HepG2 (cell line): ENCODE measurements at regions of chr16 and their contacts with region 1.

Region 1: GRCh38 chr16:78134929-78135619 is 35.6 kb downstream of the WWOX start:
- DNase-seq: peak; percentile 51
- ATAC-seq: peak; percentile 75
- H3K4me3 ChIP-seq: no peak overlapping the region; a peak in 1 of 6 replicates
- H3K27ac ChIP-seq: peak overlapping the region; percentile 0
- H3K4me1 ChIP-seq: peaks cover 48% of the 10 kb centered on the region
- H3K27me3 ChIP-seq: no peaks in the 10 kb centered on the region
- CTCF ChIP-seq: peak; percentile 66
- EP300 ChIP-seq: peak in 1 of 2 experiments; percentile 43; a peak in 2 of 4 replicates
- POLR2A ChIP-seq: no peak
- RAD21 ChIP-seq: peak; percentile 23; the same call in 1 of the 2 replicates

Region 2: DNA sequence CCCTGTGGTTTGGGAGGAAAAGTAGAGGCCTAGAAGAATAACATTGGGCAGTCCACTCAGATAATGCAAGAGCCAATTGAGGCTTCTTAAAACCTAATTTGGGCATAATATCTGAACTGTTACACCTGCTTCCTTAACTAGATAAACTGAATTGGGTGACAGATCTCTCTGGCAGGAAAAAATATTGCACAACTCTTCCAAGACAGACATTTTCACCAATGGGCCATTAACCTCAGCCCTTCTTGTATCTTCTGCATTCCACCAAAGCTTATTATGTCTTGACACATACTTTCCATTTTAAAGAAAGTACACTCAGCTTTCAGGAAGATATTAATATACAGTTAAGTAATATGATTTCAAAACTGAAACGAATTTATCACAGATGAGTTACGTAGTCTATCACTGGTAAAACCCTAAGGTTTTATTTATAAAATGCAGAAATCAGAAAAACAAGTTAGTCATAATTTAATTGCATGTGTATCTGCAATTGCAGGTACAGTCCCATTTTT is 1024.0 kb before region 1 on chr16:
- CTCF ChIA-PET with region 1: no interaction called
- POLR2A ChIA-PET with region 1: no interaction called
- in situ Hi-C with region 1: no loop called
- intact Hi-C with region 1: no loop called
- DNase-seq: no peak
- ATAC-seq: no peak
- H3K4me3 ChIP-seq: no peak overlapping the region
- H3K27ac ChIP-seq: no peak overlapping the region
- H3K4me1 ChIP-seq: no peaks in the 10 kb centered on the region
- H3K27me3 ChIP-seq: no peaks in the 10 kb centered on the region
- CTCF ChIP-seq: no peak
- EP300 ChIP-seq: no peak
- POLR2A ChIP-seq: no peak
- RAD21 ChIP-seq: no peak

Region 3: DNA sequence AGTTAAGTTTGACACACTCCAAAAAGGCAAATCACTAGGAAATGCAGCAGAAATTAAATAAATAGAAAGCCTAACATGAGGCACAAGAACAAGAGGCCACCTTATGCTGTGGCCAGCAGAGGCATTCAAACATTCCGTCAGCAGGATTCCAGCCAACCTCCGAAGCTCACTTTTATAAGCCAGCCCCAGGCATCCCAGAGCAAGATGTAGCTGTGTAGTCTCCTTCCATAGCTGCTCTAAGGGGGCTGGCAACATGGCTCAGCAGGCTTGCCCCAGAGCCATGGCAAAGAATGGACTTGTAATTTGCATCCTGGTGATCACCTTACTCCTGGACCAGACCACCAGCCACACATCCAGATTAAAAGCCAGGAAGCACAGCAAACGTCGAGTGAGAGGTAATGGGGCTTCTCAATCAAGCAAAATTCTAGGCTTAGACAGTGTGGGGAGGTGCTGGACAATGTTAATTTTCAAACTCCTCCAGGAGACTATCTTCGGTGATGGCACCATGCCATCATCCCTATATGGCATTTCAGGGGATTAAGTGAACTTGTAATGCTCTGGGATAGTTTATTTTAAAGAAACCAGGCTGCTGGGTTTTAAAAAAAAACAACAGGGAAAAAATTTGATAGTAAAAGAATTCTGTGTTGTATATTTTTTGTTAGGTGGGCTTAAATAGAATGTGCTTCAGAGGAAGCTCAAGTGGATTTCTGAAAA is 112.6 kb before region 1 on chr16 and contains the start of gene CLEC3A:
- CTCF ChIA-PET with region 1: no interaction called
- POLR2A ChIA-PET with region 1: no interaction called
- in situ Hi-C with region 1: no loop called
- intact Hi-C with region 1: no loop called
- DNase-seq: no peak
- ATAC-seq: no peak
- H3K4me3 ChIP-seq: no peak within 1 kb of the TSS
- H3K27ac ChIP-seq: no peak within 1 kb of the TSS
- H3K4me1 ChIP-seq: no peaks in the 10 kb centered on the region
- H3K27me3 ChIP-seq: peaks cover 0 to 7% of the 10 kb centered on the region in 2 experiments; a peak in 2 of 5 replicates
- CTCF ChIP-seq: no peak
- EP300 ChIP-seq: no peak
- POLR2A ChIP-seq: no peak
- RAD21 ChIP-seq: no peak
- total RNA-seq, gene CLEC3A: not detected in 2 replicates

Region 4: GRCh38 chr16:78184238-78185183 is 49.4 kb after region 1 on chr16:
- CTCF ChIA-PET with region 1: no interaction called
- POLR2A ChIA-PET with region 1: no interaction called
- in situ Hi-C with region 1: loop called (anchors 5 kb)
- intact Hi-C with region 1: no loop called
- DNase-seq: peak; percentile 68
- ATAC-seq: peak; percentile 67
- H3K4me3 ChIP-seq: no peak overlapping the region
- H3K27ac ChIP-seq: no peak overlapping the region
- H3K4me1 ChIP-seq: peaks cover 34% of the 10 kb centered on the region
- H3K27me3 ChIP-seq: no peaks in the 10 kb centered on the region
- CTCF ChIP-seq: no peak
- EP300 ChIP-seq: peak in 1 of 2 experiments; percentile 26; a peak in 1 of 4 replicates
- POLR2A ChIP-seq: no peak
- RAD21 ChIP-seq: no peak

Region 5: DNA sequence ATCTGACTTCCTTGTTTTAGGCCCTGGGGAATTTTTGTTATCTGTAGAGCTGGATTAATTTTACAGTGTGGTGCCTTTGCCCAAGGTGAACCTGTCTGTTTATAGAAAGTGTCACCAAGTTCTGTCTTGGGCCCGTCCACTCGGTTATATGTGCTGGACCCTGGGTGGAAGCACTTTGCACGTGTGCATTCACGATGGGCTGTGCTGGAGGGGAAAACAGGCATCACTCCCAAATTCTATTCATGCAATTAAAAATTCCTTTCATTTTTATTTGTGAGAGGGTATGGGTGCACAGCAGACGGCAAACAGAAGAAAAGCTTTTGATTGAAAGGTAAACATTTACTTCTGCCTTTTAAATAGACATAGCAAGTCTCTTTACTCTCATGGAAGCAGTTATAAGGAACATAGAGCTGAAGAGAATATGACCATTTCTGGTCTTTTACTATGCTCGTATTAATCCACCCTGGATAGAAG is 65.6 kb after region 1 on chr16:
- CTCF ChIA-PET with region 1: no interaction called
- POLR2A ChIA-PET with region 1: interaction called, 3 read pairs
- in situ Hi-C with region 1: no loop called
- intact Hi-C with region 1: loop called (anchors 2 kb)
- DNase-seq: peak; percentile 77
- ATAC-seq: peak; percentile 85
- H3K4me3 ChIP-seq: peak overlapping the region in 2 of 3 experiments; percentile 9 to 30; a peak in 2 of 6 replicates
- H3K27ac ChIP-seq: peak overlapping the region; percentile 33
- H3K4me1 ChIP-seq: peaks cover 70% of the 10 kb centered on the region
- H3K27me3 ChIP-seq: no peaks in the 10 kb centered on the region
- CTCF ChIP-seq: no peak
- EP300 ChIP-seq: peak in 1 of 2 experiments; percentile 83; a peak in 2 of 4 replicates
- POLR2A ChIP-seq: no peak
- RAD21 ChIP-seq: no peak

Region 6: GRCh38 chr16:78235168-78235800 is 100.2 kb after region 1 on chr16:
- CTCF ChIA-PET with region 1: interaction called, 3 read pairs
- POLR2A ChIA-PET with region 1: no interaction called
- in situ Hi-C with region 1: no loop called
- intact Hi-C with region 1: loop called (anchors 1 kb)
- DNase-seq: peak; percentile 65
- ATAC-seq: peak; percentile 96
- H3K4me3 ChIP-seq: no peak overlapping the region
- H3K27ac ChIP-seq: no peak overlapping the region
- H3K4me1 ChIP-seq: peaks cover 21% of the 10 kb centered on the region
- H3K27me3 ChIP-seq: no peaks in the 10 kb centered on the region
- CTCF ChIP-seq: peak; percentile 93
- EP300 ChIP-seq: no peak
- POLR2A ChIP-seq: no peak
- RAD21 ChIP-seq: peak; percentile 83

Region 7: DNA sequence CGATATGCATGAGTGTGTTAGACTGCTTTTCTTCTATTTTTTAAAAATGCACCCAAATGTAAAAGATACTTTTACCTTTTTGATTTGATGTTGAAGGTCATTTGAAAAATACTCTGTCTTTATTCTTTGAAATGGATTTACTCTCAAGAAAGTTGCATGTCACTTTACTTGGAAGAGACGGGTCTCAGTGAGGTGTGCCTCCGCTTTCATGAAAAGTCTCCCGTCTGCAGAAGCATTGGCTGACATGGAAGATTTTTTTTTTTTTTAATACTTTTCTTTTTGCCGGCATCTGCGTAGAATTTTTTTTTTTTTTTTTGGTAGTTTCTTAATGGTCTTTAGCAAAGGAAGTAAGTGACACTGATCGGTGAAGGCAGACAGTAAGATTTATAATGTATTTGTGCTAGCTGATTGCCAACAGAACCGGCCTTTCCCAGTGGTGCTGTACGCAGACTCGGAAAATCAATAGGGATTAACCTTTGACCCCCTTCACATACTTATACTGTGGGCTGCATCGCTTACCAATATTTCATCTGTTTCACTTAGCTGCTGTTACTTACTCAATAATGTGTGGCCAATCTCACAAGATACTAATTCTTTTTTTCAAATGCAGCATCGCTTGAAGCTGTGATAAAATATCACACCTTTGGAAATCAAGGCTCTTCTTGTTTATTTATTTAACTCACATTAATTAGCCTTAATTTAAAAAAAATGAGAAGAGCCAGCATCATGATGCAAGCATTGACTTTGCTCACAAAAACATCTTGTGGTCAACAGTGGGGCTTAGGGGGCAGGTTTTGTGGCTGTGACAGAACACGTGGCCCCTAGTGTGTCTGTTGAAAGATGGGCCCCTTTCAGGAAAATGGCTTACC is 348.3 kb after region 1 on chr16:
- CTCF ChIA-PET with region 1: no interaction called
- POLR2A ChIA-PET with region 1: interaction called, 4 read pairs
- in situ Hi-C with region 1: no loop called
- intact Hi-C with region 1: loop called (anchors 5 kb)
- DNase-seq: peak; percentile 93
- ATAC-seq: peak; percentile 72
- H3K4me3 ChIP-seq: no peak overlapping the region
- H3K27ac ChIP-seq: peak overlapping the region; percentile 90
- H3K4me1 ChIP-seq: peaks cover 89% of the 10 kb centered on the region
- H3K27me3 ChIP-seq: no peaks in the 10 kb centered on the region
- CTCF ChIP-seq: no peak
- EP300 ChIP-seq: peak; percentile 37 to 92; a peak in 3 of 4 replicates
- POLR2A ChIP-seq: no peak
- RAD21 ChIP-seq: no peak